CD4-positive, alpha-beta memory T cell (primary cell): ENCODE measurements at regions of chr12 and their contacts with region 1.

Region 1: GRCh38 chr12:100317371-100317770 is 39.5 kb upstream of the SLC17A8 start:
- DNase-seq: no peak
- H3K4me3 ChIP-seq: no peak overlapping the region
- H3K4me3 Mint-ChIP-seq: no peak overlapping the region
- H3K27ac ChIP-seq: no peak overlapping the region
- H3K27ac Mint-ChIP-seq: no peak overlapping the region
- H3K4me1 ChIP-seq: no peaks in the 10 kb centered on the region
- H3K4me1 Mint-ChIP-seq: peaks cover 0 to 4% (median under 1%) of the 10 kb centered on the region in 4 donors
- H3K27me3 ChIP-seq: no peaks in the 10 kb centered on the region
- H3K27me3 Mint-ChIP-seq: no peaks in the 10 kb centered on the region

Region 2: DNA sequence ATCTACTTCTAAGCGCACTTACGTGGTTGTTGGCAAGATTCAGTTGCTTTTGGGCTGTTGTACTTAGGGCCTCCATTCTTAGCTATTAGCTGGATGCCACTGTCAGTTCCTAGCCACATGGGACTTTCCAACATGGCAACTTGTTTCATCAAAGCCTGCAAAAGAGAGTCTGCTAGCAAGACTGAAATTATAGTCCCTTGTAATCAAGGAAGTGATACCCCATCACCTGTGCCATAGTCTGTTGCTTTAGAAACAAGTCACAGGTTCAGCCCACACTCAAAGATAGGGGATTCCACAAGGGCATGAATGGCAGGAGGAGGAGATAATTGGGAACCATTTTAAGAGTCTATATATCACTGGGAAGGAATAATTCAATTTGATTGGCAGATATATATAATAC is 12.4 kb after region 1 on chr12:
- CTCF ChIA-PET with region 1: no interaction called
- POLR2A ChIA-PET with region 1: no interaction called
- intact Hi-C with region 1: loop called (anchors 2 kb)
- DNase-seq: no peak
- H3K4me3 ChIP-seq: no peak overlapping the region
- H3K4me3 Mint-ChIP-seq: no peak overlapping the region
- H3K27ac ChIP-seq: no peak overlapping the region
- H3K27ac Mint-ChIP-seq: peak overlapping the region in 1 of 7 donors; percentile 32
- H3K4me1 ChIP-seq: no peaks in the 10 kb centered on the region
- H3K4me1 Mint-ChIP-seq: no peaks in the 10 kb centered on the region
- H3K27me3 ChIP-seq: no peaks in the 10 kb centered on the region
- H3K27me3 Mint-ChIP-seq: no peaks in the 10 kb centered on the region

Region 3: DNA sequence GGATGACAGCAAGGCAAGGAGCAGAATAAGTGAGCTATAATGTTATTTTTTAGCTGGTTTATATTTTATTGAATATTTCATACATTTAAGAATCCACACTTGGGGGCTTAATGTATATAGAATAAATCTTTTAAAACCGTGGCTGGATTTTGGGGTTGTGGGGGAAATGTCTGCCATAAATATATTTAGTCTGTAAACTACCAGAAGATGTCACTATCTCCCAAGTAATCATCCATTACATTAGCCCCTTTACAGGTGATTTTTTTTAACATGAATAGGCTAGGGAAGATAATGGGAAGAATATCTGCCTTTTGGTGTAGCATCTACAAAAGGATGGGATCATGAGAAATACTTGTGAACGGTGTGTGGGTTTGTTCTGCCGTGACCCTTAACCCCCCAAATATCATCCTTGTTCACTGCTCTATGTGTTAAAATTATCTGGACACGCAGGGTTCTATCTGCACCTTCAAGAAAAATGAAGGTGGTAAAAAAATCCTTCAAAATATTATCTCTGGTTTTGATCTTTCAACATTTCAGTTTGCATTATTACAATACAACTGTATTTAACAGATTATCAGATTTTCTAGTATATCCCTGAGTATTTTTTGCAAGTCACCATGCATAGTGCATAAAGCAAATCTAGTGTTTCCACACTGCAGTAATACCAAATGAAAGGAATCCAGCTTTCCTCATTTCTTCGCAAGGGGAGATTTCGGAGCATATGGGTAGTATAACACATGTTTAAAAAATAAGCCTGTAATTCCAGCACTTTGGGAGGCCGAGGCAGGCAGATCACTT is 31.5 kb after region 1 on chr12:
- CTCF ChIA-PET with region 1: no interaction called
- POLR2A ChIA-PET with region 1: no interaction called
- intact Hi-C with region 1: no loop called
- DNase-seq: no peak
- H3K4me3 ChIP-seq: no peak overlapping the region
- H3K4me3 Mint-ChIP-seq: no peak overlapping the region
- H3K27ac ChIP-seq: no peak overlapping the region
- H3K27ac Mint-ChIP-seq: peak overlapping the region in 2 of 7 donors; percentile 16 to 17
- H3K4me1 ChIP-seq: no peaks in the 10 kb centered on the region
- H3K4me1 Mint-ChIP-seq: no peaks in the 10 kb centered on the region
- H3K27me3 ChIP-seq: no peaks in the 10 kb centered on the region
- H3K27me3 Mint-ChIP-seq: peaks cover 0 to 4% of the 10 kb centered on the region in 2 donors